ENCODE measurements at regions of chr1 and their contacts with region 1.

Region 1: DNA sequence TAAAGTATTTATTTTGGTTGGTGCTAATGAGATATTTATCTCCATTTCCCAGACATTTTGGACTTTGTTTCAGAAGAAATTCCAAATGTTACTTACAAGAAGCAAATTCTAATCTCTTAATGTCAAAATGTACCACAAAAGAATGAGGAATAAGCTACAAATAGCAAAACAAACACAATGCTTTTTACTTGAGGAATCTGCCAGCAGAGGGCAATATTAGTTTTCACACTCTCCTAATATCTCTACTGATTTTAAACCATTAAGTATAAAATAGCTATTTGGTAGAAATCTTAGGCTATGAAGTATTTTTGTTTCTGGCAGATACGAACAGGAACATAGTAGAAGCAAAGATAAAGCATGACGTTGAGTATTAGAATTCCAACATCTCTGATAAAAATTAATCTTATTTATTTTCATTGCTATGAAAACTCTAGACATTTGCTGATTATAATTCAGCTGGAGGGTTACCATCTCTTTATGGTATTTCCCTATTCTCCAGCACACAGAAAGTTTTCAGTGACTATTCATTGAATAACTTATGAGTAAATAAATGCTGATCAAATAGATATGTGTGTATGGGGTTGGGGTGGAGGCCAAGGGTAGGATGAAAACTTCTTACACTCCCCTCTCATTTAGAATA is 13.4 kb upstream of the HMCN1 start:
- DNase-seq: no peak
- ATAC-seq: peak; percentile 68 to 73

Region 2: GRCh38 chr1:186009039-186009737 is 288.4 kb after region 1 on chr1:
- intact Hi-C with region 1: no loop called
- DNase-seq: no peak
- ATAC-seq: peak in 1 of 2 donors; percentile 53

Region 3: GRCh38 chr1:186212544-186213226 is 491.9 kb after region 1 on chr1:
- intact Hi-C with region 1: loop called in 1 of 2 experiments (anchors 1 kb)
- DNase-seq: peak; percentile 28
- ATAC-seq: peak; percentile 90 to 98